Calu3 (cell line): ENCODE measurements at regions of chr6 and their contacts with region 1.

Region 1: DNA sequence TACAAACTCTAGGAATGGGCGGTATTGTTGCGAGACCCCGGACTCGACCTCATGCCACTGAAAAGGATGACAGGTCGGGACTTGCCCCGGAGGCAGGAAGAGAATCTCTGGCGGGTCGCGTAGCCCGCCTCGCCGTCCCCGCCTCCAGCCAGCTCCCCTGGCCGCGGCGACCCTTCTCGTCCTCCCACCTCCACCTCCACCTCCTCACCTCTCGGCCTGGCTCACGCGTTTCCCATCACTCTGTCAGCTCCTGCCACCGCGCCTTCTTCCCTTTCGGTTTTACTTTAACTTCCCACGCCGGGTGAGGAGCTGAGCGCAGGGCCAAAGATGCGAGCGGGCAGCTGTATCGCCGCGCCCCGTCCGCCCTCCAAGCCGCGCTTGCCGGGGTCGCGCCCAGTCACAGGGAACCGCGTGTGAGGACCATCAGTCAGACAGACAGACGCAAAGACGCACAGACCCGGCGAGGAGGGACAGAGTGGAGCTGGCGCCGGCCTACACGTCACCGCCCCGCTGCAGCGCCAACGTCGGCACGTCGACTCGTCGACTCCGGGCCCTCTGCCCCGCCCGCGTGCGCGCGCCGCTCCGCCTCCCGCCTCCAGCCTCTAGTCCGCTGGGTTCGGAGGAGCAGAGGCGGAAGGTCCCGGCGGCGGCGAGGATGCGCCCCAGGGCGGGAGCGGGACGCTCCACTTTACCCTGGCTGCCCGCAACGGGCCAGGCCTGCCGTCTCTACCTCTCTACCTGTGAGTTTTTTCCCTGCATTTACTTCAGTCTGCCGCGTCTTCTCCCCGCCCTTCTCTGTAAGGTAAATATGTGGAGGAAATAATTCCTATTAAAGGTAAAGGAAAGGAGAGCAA is at the start of gene ASCC3:
- DNase-seq: peak; percentile 94
- H3K4me3 Mint-ChIP-seq: peak within 1 kb of the TSS; percentile 99
- H3K27ac Mint-ChIP-seq: peak within 1 kb of the TSS; percentile 98
- H3K4me1 Mint-ChIP-seq: peaks cover 16% of the 10 kb centered on the region
- H3K27me3 Mint-ChIP-seq: no peaks in the 10 kb centered on the region
- CTCF ChIP-seq: no peak
- total RNA-seq, gene ASCC3: 40.5 and 45.6 TPM in 2 replicates

Region 2: DNA sequence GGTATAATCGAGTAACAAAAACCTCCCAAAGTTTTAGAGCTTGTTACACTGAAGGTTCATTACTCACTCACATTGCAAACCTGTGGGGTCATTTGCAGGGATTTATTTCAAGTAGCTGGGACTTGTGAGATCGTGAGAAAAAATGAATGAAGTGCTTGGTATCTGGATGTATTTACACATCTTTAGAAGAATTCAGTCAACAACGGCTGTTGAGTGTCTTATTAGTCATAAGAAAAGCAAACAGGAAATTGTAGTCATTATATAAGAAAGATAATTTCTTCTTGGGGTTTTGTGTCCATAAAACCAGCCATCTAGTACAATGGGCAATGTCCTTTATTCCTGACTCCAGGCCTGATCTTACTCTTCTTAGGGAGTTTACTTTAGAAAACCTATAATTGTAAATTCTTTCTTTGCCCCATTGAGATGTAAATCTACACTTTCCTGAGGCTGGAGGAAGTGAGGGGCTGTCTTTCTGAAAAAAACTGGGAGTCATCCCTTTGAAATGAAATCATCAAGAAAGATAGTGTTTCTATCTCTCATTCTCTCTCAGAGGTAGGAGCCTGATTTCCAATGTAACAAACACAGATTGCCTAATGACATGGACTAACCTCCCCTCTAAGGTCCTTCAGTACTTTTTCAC is 202.6 kb after region 1 on chr6:
- CTCF ChIA-PET with region 1: no interaction called
- intact Hi-C with region 1: loop called (anchors 10 kb)
- DNase-seq: no peak
- H3K4me3 Mint-ChIP-seq: no peak overlapping the region
- H3K27ac Mint-ChIP-seq: peak overlapping the region; percentile 56
- H3K4me1 Mint-ChIP-seq: peaks cover 8% of the 10 kb centered on the region
- H3K27me3 Mint-ChIP-seq: no peaks in the 10 kb centered on the region
- CTCF ChIP-seq: no peak